Motor neuron (in vitro differentiated cells): ENCODE measurements at regions of chr17 and their contacts with region 1.

Region 1: DNA sequence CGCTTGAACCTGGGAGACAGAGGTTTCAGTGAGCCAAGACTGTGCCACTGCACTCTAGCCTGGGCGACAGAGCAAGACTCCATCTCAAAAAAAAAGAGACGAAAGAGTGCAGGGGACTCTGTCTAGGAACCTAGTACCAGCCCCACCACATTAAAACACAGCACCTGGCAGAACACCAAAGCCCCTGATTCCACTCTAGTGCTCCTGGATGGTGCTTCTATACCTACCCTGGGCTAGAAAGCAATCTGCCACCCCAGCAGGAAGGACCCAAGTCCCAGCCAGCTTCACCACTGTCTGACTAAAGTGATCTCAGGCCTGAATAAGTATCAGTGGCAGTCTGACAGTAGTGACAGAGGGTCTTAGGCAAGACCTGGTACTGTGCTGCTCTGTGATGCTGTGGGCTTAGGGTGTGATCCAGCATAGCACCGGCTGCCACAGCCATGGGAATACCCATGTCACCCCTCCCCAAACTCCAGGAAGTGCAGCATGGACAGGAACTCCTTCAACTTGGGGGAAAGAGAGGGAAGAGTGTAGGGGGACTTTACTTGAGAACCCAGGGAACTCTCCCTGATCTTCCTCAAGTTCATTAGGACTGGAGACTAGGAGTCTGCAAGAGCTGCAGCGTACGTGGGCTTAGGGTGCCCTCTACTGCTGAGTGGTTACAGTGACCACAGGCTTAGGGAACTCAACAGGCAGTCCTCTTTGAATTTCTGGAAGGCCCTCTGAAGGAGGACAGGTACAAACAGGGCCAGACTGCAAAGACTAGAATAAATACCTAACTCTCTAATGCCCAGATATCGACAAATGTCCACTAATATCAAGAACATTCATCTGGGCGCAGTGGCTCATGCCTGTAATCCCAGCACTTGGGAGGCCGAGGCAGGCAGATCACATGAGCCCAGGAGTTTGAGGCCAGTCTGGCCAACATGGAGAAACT is 30.0 kb upstream of the RNF43 start:
- ATAC-seq: peak; percentile 65 to 100 (median 84)
- H3K4me3 ChIP-seq: no peak overlapping the region
- H3K27ac ChIP-seq: no peak overlapping the region
- H3K4me1 ChIP-seq: no peaks in the 10 kb centered on the region

Region 2: GRCh38 chr17:58317421-58318064 is 129.8 kb before region 1 on chr17:
- in situ Hi-C with region 1: loop called in 1 of 9 experiments (anchors 10 kb)
- ATAC-seq: peak; percentile 42 to 84 (median 48)
- H3K4me3 ChIP-seq: no peak overlapping the region
- H3K27ac ChIP-seq: no peak overlapping the region
- H3K4me1 ChIP-seq: no peaks in the 10 kb centered on the region